ENCODE measurements at regions of chr11 and their contacts with region 1.

Region 1: DNA sequence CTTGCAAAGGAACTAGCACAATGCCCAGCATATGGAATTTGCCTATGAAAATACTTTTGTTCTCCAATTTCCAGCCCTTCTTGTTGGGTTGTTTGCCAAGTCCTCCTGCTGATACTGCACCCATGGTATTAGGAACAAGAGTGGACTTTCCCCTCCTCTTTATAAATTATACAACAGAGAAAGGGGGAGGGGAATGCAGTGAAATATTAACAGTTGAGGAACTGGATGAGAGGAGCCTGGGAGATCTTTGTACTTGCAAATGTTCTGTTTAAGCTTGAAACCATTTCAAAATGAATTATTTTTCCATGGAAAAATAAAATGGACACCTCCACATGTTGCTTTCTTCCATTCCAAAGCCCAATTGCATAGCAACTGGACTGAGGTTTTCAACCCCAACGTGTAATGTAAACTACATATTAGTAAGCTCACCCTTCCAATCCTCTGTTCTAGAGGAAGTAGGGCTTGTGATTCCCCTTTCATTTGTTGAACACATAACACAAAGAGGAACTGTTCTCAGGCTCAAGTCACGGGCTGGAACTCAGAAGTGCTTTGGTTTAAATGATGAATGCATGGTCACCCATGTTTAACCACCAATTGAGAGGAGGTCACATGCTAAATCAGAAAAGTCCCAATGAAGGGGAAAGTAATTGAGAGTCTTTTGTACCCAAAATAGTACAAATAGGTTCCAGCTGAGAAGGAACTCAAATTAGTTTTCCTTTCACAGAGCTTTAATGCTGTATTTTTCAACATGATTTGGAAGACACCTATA is 66.2 kb upstream of the ZC3H12C start:
- DNase-seq: peak; percentile 71
- CTCF ChIP-seq: no peak

Region 2: GRCh38 chr11:110148775-110149744 is 122.0 kb after region 1 on chr11:
- in situ Hi-C with region 1: loop called (anchors 25 kb)
- DNase-seq: no peak
- CTCF ChIP-seq: no peak

Measured in GM13977 (cell line).